Activated B cell treated with CpG ODN at 0.5 μM for 24 hours (primary cell): ENCODE measurements at regions of chr2 and their contacts with region 1.

Region 1: GRCh38 chr2:98134172-98135005 is 47.4 kb downstream of the VWA3B start:
- DNase-seq: peak; percentile 60
- ATAC-seq: peak; percentile 99
- H3K4me3 Mint-ChIP-seq: peak overlapping the region; percentile 29
- H3K27ac Mint-ChIP-seq: peak overlapping the region; percentile 18
- H3K4me1 Mint-ChIP-seq: peaks cover 20% of the 10 kb centered on the region
- H3K27me3 Mint-ChIP-seq: no peaks in the 10 kb centered on the region
- CTCF ChIP-seq: no peak

Region 2: DNA sequence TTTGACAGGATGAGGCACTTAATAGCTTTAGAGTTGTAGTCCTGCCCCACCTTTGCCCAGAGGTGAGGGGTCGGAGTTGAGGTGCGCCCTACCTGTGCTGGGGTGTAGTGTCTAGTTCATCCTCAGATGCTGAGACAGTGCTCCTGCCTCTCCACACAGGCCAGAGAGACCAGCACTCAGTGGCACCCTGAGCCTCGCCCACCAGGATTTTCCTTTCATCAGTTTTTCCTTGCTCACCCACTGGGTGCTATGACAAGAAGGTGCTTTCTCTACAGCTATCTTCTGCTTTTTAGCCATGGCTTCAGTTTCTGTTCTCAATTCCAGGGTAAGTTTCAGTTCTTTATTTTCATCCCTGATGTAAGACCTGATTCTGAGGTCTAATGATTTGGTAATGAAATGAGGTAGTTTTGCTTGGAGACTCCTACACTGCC is 121.8 kb before region 1 on chr2:
- CTCF ChIA-PET with region 1: no interaction called
- POLR2A ChIA-PET with region 1: interaction called, 3 read pairs
- intact Hi-C with region 1: loop called (anchors 1 kb)
- DNase-seq: peak; percentile 61
- ATAC-seq: peak; percentile 81
- H3K4me3 Mint-ChIP-seq: peak overlapping the region; percentile 79
- H3K27ac Mint-ChIP-seq: peak overlapping the region; percentile 96
- H3K4me1 Mint-ChIP-seq: peaks cover 75% of the 10 kb centered on the region
- H3K27me3 Mint-ChIP-seq: no peaks in the 10 kb centered on the region
- CTCF ChIP-seq: no peak

Region 3: GRCh38 chr2:98212092-98212797 is 77.9 kb after region 1 on chr2:
- CTCF ChIA-PET with region 1: no interaction called
- POLR2A ChIA-PET with region 1: no interaction called
- intact Hi-C with region 1: no loop called
- DNase-seq: no peak
- ATAC-seq: no peak
- H3K4me3 Mint-ChIP-seq: no peak overlapping the region
- H3K27ac Mint-ChIP-seq: no peak overlapping the region
- H3K4me1 Mint-ChIP-seq: no peaks in the 10 kb centered on the region
- H3K27me3 Mint-ChIP-seq: peaks cover 34% of the 10 kb centered on the region
- CTCF ChIP-seq: no peak